ENCODE measurements at regions of chr2 and their contacts with region 1.

Region 1: GRCh38 chr2:221573430-221574230 is 1.5 kb upstream of the EPHA4 start:
- DNase-seq: peak; percentile 60 to 90 (median 77)
- ATAC-seq: peak; percentile 65
- H3K4me3 ChIP-seq: peak overlapping the region; percentile 91
- H3K4me3 Mint-ChIP-seq: peak overlapping the region; percentile 77 to 97 (median 86)
- H3K27ac ChIP-seq: no peak overlapping the region
- H3K27ac Mint-ChIP-seq: peak overlapping the region in 5 of 9 donors; percentile 10 to 76 (median 71)
- H3K4me1 ChIP-seq: peaks cover 11 to 17% of the 10 kb centered on the region in 2 donors
- H3K4me1 Mint-ChIP-seq: peaks cover 22 to 35% (median 31%) of the 10 kb centered on the region in 7 donors
- H3K27me3 ChIP-seq: peaks cover 0 to 4% of the 10 kb centered on the region in 2 donors
- H3K27me3 Mint-ChIP-seq: peaks cover 33 to 68% (median 59%) of the 10 kb centered on the region in 5 donors

Region 2: DNA sequence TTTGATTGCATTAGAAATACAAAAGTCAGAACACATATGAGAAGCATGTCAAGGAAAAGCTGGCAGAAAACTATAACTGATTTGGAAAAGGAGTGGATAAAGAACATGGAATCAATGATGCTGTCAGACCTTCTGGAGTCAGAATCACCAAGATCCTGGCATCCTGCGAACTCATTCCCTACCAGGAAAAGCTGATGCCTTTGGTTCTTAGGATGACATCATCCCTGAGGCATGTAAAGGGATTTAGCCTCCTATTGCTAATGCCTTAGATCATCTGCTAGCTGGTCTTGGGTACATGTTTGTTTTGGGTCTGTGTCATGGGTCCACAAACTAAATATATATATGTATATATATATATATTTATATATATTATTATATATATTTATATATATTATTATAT is 682.2 kb before region 1 on chr2:
- CTCF ChIA-PET with region 1: no interaction called
- POLR2A ChIA-PET with region 1: no interaction called
- intact Hi-C with region 1: loop called in 1 of 2 experiments (anchors 10 kb)
- DNase-seq: no peak
- ATAC-seq: no peak
- H3K4me3 ChIP-seq: no peak overlapping the region
- H3K4me3 Mint-ChIP-seq: no peak overlapping the region
- H3K27ac ChIP-seq: no peak overlapping the region
- H3K27ac Mint-ChIP-seq: no peak overlapping the region
- H3K4me1 ChIP-seq: no peaks in the 10 kb centered on the region
- H3K4me1 Mint-ChIP-seq: no peaks in the 10 kb centered on the region
- H3K27me3 ChIP-seq: no peaks in the 10 kb centered on the region
- H3K27me3 Mint-ChIP-seq: peaks cover 0 to 26% (median 0%) of the 10 kb centered on the region in 5 donors

Region 3: DNA sequence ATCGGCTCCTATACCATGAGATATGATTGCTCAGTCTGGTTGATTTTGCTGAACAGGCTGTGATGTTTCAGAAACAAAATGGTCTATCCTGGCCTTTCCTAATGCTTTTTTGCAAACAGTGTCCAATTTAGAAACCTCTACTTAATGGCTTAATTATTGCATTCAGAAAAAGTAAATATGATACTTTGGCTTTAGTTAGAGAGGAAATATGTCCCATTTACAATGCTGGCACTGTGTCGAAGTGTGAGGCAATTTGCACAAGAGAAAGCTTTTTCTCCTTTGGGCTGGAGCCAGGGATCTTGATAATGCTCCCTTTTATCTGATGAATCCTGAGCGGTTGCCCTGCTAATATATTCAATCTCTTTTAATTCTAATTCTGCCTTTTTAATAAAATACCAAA is 420.4 kb before region 1 on chr2:
- CTCF ChIA-PET with region 1: no interaction called
- POLR2A ChIA-PET with region 1: no interaction called
- intact Hi-C with region 1: loop called in 1 of 2 experiments (anchors 10 kb)
- DNase-seq: no peak
- ATAC-seq: no peak
- H3K4me3 ChIP-seq: no peak overlapping the region
- H3K4me3 Mint-ChIP-seq: no peak overlapping the region
- H3K27ac ChIP-seq: no peak overlapping the region
- H3K27ac Mint-ChIP-seq: no peak overlapping the region
- H3K4me1 ChIP-seq: no peaks in the 10 kb centered on the region
- H3K4me1 Mint-ChIP-seq: no peaks in the 10 kb centered on the region
- H3K27me3 ChIP-seq: no peaks in the 10 kb centered on the region
- H3K27me3 Mint-ChIP-seq: peaks cover 0 to 8% (median 0%) of the 10 kb centered on the region in 5 donors

Region 4: DNA sequence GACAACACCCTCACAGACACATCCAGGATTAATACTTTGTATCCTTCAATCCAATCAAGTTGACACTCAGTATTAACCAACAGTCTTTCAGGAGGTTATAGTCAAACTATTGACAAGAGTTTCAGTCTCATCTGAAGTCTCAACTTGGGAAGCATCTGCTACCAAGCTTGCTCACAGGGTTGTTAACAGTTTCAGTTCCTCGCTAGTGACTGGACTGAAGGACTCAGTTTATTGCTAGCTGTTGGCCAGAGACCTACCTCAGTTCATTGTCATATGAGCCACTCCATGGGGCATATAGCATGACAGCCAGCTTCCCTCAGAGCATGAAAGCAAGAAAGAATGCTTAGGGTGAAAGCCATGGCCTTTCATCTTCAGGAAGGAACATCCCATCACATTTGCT is 230.1 kb before region 1 on chr2:
- CTCF ChIA-PET with region 1: no interaction called
- POLR2A ChIA-PET with region 1: no interaction called
- intact Hi-C with region 1: loop called in 1 of 2 experiments (anchors 5 kb)
- DNase-seq: no peak
- ATAC-seq: no peak
- H3K4me3 ChIP-seq: no peak overlapping the region
- H3K4me3 Mint-ChIP-seq: no peak overlapping the region
- H3K27ac ChIP-seq: no peak overlapping the region
- H3K27ac Mint-ChIP-seq: peak overlapping the region in 1 of 9 donors; percentile 15
- H3K4me1 ChIP-seq: no peaks in the 10 kb centered on the region
- H3K4me1 Mint-ChIP-seq: no peaks in the 10 kb centered on the region
- H3K27me3 ChIP-seq: no peaks in the 10 kb centered on the region
- H3K27me3 Mint-ChIP-seq: peaks cover 0 to 10% (median 6%) of the 10 kb centered on the region in 5 donors

Region 5: GRCh38 chr2:221463241-221463896 is 110.3 kb before region 1 on chr2:
- CTCF ChIA-PET with region 1: no interaction called
- POLR2A ChIA-PET with region 1: no interaction called
- intact Hi-C with region 1: loop called in 1 of 2 experiments (anchors 5 kb)
- DNase-seq: no peak
- ATAC-seq: no peak
- H3K4me3 ChIP-seq: no peak overlapping the region
- H3K4me3 Mint-ChIP-seq: peak overlapping the region in 4 of 10 donors; percentile 4 to 34 (median 27)
- H3K27ac ChIP-seq: no peak overlapping the region
- H3K27ac Mint-ChIP-seq: peak overlapping the region in 2 of 9 donors; percentile 14 to 26
- H3K4me1 ChIP-seq: peaks cover 15 to 23% of the 10 kb centered on the region in 2 donors
- H3K4me1 Mint-ChIP-seq: peaks cover 16 to 49% (median 39%) of the 10 kb centered on the region in 7 donors
- H3K27me3 ChIP-seq: no peaks in the 10 kb centered on the region
- H3K27me3 Mint-ChIP-seq: peaks cover 0 to 45% (median 0%) of the 10 kb centered on the region in 5 donors

Region 6: DNA sequence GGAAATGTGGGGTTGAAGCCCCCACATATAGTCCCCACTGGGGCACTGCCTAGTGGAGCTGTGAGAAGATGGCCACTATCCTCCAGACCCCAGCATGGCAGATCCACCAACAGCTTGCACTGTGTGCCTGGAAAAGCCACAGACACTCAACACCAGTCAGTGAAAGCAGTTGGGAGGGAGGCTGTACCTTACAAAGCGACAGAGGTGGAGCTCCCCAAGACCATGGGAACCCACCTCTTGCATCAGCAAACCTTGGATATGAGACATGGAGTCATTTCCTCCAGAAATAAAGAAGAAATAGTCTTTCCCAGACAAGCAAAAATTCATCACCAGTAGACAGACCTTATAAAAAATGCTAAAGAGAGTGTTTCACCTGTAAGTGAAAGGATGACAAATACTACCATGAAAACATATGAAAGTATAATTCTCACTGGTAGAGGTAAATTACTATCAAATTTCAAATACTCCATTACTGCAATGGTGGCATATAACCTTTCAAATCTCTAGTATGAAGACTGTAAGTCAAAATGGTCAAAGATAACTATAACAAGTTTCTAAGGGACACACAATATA is 151.1 kb after region 1 on chr2:
- CTCF ChIA-PET with region 1: no interaction called
- POLR2A ChIA-PET with region 1: no interaction called
- intact Hi-C with region 1: loop called in 1 of 2 experiments (anchors 2 kb)
- DNase-seq: no peak
- ATAC-seq: no peak
- H3K4me3 ChIP-seq: no peak overlapping the region
- H3K4me3 Mint-ChIP-seq: peak overlapping the region in 2 of 10 donors; percentile 3 to 72
- H3K27ac ChIP-seq: no peak overlapping the region
- H3K27ac Mint-ChIP-seq: peak overlapping the region in 3 of 9 donors; percentile 10 to 95 (median 42)
- H3K4me1 ChIP-seq: no peaks in the 10 kb centered on the region
- H3K4me1 Mint-ChIP-seq: no peaks in the 10 kb centered on the region
- H3K27me3 ChIP-seq: no peaks in the 10 kb centered on the region
- H3K27me3 Mint-ChIP-seq: peaks cover 0 to 6% (median 0%) of the 10 kb centered on the region in 5 donors

Region 7: DNA sequence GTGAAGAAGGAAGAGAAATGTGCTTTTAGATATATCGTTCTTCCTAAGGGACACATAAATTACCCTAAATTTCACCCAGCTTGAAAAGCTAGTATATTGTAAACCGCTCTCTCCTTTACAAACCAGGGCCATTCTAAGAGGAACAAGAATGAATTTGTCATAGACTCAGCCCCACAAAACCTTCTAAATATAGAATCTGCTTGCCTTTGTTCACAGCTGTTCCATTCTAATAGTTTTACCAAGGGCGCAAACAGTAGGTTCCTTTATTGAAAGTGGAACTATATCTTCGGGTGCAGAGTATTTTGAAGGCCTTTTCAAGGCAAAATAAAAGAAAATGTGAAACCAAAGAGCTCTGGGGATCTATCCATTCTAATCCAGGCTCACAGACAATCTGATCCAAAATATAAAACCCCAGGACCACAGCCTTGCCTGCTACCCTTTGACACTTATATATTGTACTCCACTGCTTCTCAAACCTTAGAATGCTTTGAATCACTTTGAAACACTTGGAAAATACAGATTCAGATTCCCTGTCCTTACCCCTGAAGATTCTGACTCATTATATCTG is 408.4 kb after region 1 on chr2:
- CTCF ChIA-PET with region 1: no interaction called
- POLR2A ChIA-PET with region 1: no interaction called
- intact Hi-C with region 1: no loop called
- DNase-seq: no peak
- ATAC-seq: no peak
- H3K4me3 ChIP-seq: no peak overlapping the region
- H3K4me3 Mint-ChIP-seq: no peak overlapping the region
- H3K27ac ChIP-seq: no peak overlapping the region
- H3K27ac Mint-ChIP-seq: no peak overlapping the region
- H3K4me1 ChIP-seq: no peaks in the 10 kb centered on the region
- H3K4me1 Mint-ChIP-seq: no peaks in the 10 kb centered on the region
- H3K27me3 ChIP-seq: no peaks in the 10 kb centered on the region
- H3K27me3 Mint-ChIP-seq: peaks cover 0 to 6% (median 0%) of the 10 kb centered on the region in 5 donors